ENCODE measurements at regions of chr11 and their contacts with region 1.

Region 1: DNA sequence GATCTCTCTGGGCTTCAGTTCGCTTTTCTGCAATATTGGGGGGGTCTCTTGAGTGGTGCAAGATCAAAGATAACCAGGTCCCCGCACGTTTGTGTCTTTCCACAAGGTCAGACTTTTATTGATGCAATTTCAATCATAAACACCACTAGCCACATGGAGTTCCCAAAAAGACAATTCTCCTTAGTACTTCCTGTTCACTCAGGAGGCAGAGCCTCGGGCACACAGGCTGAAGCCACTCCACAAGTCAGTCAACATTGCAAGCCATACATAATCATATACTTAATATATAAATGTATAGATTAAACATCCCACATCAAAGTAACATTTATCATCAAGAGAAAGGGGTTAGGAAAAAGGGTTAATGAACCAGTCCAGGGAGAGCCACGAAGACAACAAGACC is 12.0 kb downstream of the ST14 start:
- DNase-seq: no peak
- H3K4me3 ChIP-seq: peak overlapping the region; percentile 48
- H3K27ac ChIP-seq: peak overlapping the region; percentile 71
- H3K4me1 ChIP-seq: peaks cover 90% of the 10 kb centered on the region
- CTCF ChIP-seq: no peak

Region 2: GRCh38 chr11:130159657-130160497 is 11.7 kb before region 1 on chr11 and contains the start of gene ST14:
- CTCF ChIA-PET with region 1: interaction called, 3 read pairs
- POLR2A ChIA-PET with region 1: interaction called, 74 read pairs
- intact Hi-C with region 1: no loop called
- DNase-seq: peak; percentile 70
- H3K4me3 ChIP-seq: peak within 1 kb of the TSS; percentile 74
- H3K27ac ChIP-seq: peak within 1 kb of the TSS; percentile 93
- H3K4me1 ChIP-seq: peaks cover 76% of the 10 kb centered on the region
- CTCF ChIP-seq: no peak; the same call in 1 of the 2 replicates
- total RNA-seq, gene ST14: 110 and 135 TPM in 2 replicates

Measured in OCI-LY7 (cell line).